Naive thymus-derived CD4-positive, alpha-beta T cell (primary cell): ENCODE measurements at regions of chr11 and their contacts with region 1.

Region 1: GRCh38 chr11:125553357-125553756 is 15.9 kb upstream of the EI24 start:
- DNase-seq: no peak
- ATAC-seq: no peak
- H3K4me3 ChIP-seq: no peak overlapping the region
- H3K4me3 Mint-ChIP-seq: no peak overlapping the region
- H3K27ac ChIP-seq: no peak overlapping the region
- H3K27ac Mint-ChIP-seq: no peak overlapping the region
- H3K4me1 ChIP-seq: no peaks in the 10 kb centered on the region
- H3K4me1 Mint-ChIP-seq: no peaks in the 10 kb centered on the region
- H3K27me3 ChIP-seq: no peaks in the 10 kb centered on the region
- H3K27me3 Mint-ChIP-seq: peaks cover 0 to 8% (median 6%) of the 10 kb centered on the region in 5 donors

Region 2: GRCh38 chr11:125180413-125181305 is 372.7 kb before region 1 on chr11:
- CTCF ChIA-PET with region 1: no interaction called
- POLR2A ChIA-PET with region 1: no interaction called
- intact Hi-C with region 1: loop called in 1 of 2 experiments (anchors 5 kb)
- DNase-seq: no peak
- ATAC-seq: no peak
- H3K4me3 ChIP-seq: no peak overlapping the region
- H3K4me3 Mint-ChIP-seq: no peak overlapping the region
- H3K27ac ChIP-seq: no peak overlapping the region
- H3K27ac Mint-ChIP-seq: no peak overlapping the region
- H3K4me1 ChIP-seq: no peaks in the 10 kb centered on the region
- H3K4me1 Mint-ChIP-seq: no peaks in the 10 kb centered on the region
- H3K27me3 ChIP-seq: no peaks in the 10 kb centered on the region
- H3K27me3 Mint-ChIP-seq: peaks cover 35 to 59% (median 36%) of the 10 kb centered on the region in 5 donors